Panc1 (cell line): ENCODE measurements at regions of chr2 and their contacts with region 1.

Region 1: DNA sequence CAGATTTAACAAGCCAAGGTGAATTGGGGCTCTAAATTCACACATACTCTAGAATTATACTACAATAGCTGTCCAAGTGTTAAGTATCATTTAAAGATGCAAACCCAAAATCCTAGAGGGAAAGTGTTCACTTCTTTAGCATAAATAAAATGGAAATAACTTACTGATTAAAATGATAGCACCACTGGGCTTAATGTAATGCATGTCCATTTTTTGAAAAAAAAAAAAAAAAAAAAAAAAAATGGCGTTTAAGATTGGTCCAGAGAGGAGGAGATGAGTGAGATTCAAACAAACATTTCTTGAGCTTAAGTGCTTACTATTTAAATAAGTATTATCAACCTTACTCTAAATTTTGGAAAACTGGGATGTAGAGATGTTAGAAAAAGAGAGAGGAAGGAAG is 251.5 kb upstream of the CWC22 start:
- DNase-seq: no peak
- ATAC-seq: no peak
- H3K4me3 ChIP-seq: no peak overlapping the region
- H3K27ac ChIP-seq: peak overlapping the region; percentile 60; the same call in 1 of the 2 replicates
- H3K4me1 ChIP-seq: no peaks in the 10 kb centered on the region
- H3K27me3 ChIP-seq: no peaks in the 10 kb centered on the region
- CTCF ChIP-seq: no peak

Region 2: GRCh38 chr2:178522950-178523595 is 1735.5 kb before region 1 on chr2:
- CTCF ChIA-PET with region 1: no interaction called
- POLR2A ChIA-PET with region 1: interaction called, 16 read pairs
- in situ Hi-C with region 1: no loop called
- intact Hi-C with region 1: no loop called
- DNase-seq: peak; percentile 65
- ATAC-seq: peak; percentile 99
- H3K4me3 ChIP-seq: peak overlapping the region; percentile 99
- H3K27ac ChIP-seq: peak overlapping the region; percentile 96
- H3K4me1 ChIP-seq: peaks cover 7% of the 10 kb centered on the region; the same call in 1 of the 2 replicates
- H3K27me3 ChIP-seq: no peaks in the 10 kb centered on the region
- CTCF ChIP-seq: peak; percentile 96

Region 3: DNA sequence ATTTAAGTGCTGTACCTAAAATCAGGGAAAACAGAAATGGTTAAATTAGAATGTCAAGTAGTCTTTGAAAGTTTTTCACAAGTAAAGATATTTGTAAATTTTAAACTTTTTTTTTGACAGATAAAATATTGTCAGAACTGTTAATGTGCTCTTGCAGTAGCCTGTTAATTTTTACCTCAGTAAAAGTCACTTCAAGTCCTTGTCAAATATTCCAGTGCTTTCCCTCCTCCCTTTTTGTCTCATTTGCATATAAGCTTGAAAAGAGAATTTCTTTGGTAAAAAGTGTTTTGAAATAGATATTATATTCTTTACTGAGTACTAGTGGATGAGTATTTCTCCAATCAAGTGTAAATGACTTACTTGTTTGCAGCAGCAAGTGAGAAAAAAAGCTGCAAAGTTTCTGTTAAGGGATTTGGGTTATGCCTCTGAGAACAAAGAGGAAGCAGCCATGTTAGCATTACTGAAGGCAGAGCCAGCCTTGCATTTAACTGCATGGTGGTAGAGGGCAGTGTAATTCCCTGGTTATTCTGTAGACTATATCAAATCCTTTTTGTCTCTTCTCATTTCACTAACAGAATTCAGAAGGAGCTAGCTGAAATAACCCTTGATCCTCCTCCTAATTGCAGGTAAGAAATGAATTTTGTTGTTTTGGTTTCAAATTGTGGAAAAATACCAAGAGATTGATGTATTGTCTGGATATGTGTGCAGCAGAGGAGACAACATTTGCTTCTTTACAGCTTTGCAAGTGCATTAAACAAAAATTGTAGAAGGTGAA is 725.1 kb after region 1 on chr2:
- CTCF ChIA-PET with region 1: no interaction called
- POLR2A ChIA-PET with region 1: no interaction called
- in situ Hi-C with region 1: no loop called
- intact Hi-C with region 1: no loop called
- DNase-seq: no peak
- ATAC-seq: no peak
- H3K4me3 ChIP-seq: peak overlapping the region; percentile 7 to 23; a peak in 2 of 4 replicates
- H3K27ac ChIP-seq: peak overlapping the region; percentile 55
- H3K4me1 ChIP-seq: peaks cover 33% of the 10 kb centered on the region
- H3K27me3 ChIP-seq: no peaks in the 10 kb centered on the region
- CTCF ChIP-seq: peak; percentile 60; the same call in 1 of the 2 replicates